ENCODE measurements at regions of chr17 and their contacts with region 1.

Region 1: GRCh38 chr17:17028059-17028877 is 14.0 kb upstream of the MPRIP start:
- DNase-seq: peak; percentile 94
- ATAC-seq: peak; percentile 96
- H3K4me3 ChIP-seq: peak overlapping the region; percentile 35 to 51
- H3K27ac ChIP-seq: peak overlapping the region; percentile 59
- H3K4me1 ChIP-seq: peaks cover 47 to 70% of the 10 kb centered on the region in 2 experiments
- H3K27me3 ChIP-seq: no peaks in the 10 kb centered on the region
- CTCF ChIP-seq: no peak
- POLR2A ChIP-seq: no peak
- RAD21 ChIP-seq: no peak; the same call in 1 of the 2 replicates

Region 2: GRCh38 chr17:17016199-17016866 is 11.9 kb before region 1 on chr17:
- CTCF ChIA-PET with region 1: interaction called, 7 read pairs
- POLR2A ChIA-PET with region 1: interaction called, 19 read pairs
- RAD21 ChIA-PET with region 1: no interaction called
- intact Hi-C with region 1: no loop called
- DNase-seq: no peak
- ATAC-seq: no peak
- H3K4me3 ChIP-seq: no peak overlapping the region
- H3K27ac ChIP-seq: peak overlapping the region; percentile 66
- H3K4me1 ChIP-seq: peaks cover 70 to 85% of the 10 kb centered on the region in 2 experiments
- H3K27me3 ChIP-seq: no peaks in the 10 kb centered on the region
- CTCF ChIP-seq: no peak
- POLR2A ChIP-seq: no peak
- RAD21 ChIP-seq: no peak

Region 3: GRCh38 chr17:17041571-17042380 is 13.5 kb after region 1 on chr17:
- CTCF ChIA-PET with region 1: interaction called, 5 read pairs
- POLR2A ChIA-PET with region 1: interaction called, 17 read pairs
- RAD21 ChIA-PET with region 1: no interaction called
- intact Hi-C with region 1: no loop called
- DNase-seq: peak; percentile 93
- ATAC-seq: peak; percentile 96
- H3K4me3 ChIP-seq: peak overlapping the region; percentile 47 to 59
- H3K27ac ChIP-seq: peak overlapping the region; percentile 7; the same call in 1 of the 2 replicates
- H3K4me1 ChIP-seq: peaks cover 40 to 66% of the 10 kb centered on the region in 2 experiments
- H3K27me3 ChIP-seq: no peaks in the 10 kb centered on the region
- CTCF ChIP-seq: no peak
- POLR2A ChIP-seq: no peak
- RAD21 ChIP-seq: no peak

Region 4: GRCh38 chr17:17156107-17156506 is 127.8 kb after region 1 on chr17:
- CTCF ChIA-PET with region 1: no interaction called
- POLR2A ChIA-PET with region 1: no interaction called
- RAD21 ChIA-PET with region 1: no interaction called
- intact Hi-C with region 1: no loop called
- DNase-seq: no peak
- ATAC-seq: no peak
- H3K4me3 ChIP-seq: no peak overlapping the region
- H3K27ac ChIP-seq: no peak overlapping the region
- H3K4me1 ChIP-seq: peaks cover 2 to 16% of the 10 kb centered on the region in 2 experiments; a peak in 2 of 4 replicates
- H3K27me3 ChIP-seq: no peaks in the 10 kb centered on the region
- CTCF ChIP-seq: no peak
- POLR2A ChIP-seq: no peak
- RAD21 ChIP-seq: no peak

Measured in HCT116 (cell line).